Stomach (tissue), 19 donors: ENCODE measurements at regions of chr15 and their contacts with region 1.

Region 1: GRCh38 chr15:38817427-38818156 is 253.0 kb upstream of the RASGRP1 start:
- DNase-seq: peak; percentile 89 to 93
- H3K4me3 ChIP-seq: no peak overlapping the region
- H3K27ac ChIP-seq: no peak overlapping the region
- H3K4me1 ChIP-seq: peaks cover 0 to 11% (median 7%) of the 10 kb centered on the region in 4 donors
- H3K27me3 ChIP-seq: no peaks in the 10 kb centered on the region
- CTCF ChIP-seq: peak in 6 of 7 experiments; percentile 67 to 99 (median 98)
- EP300 ChIP-seq: no peak
- POLR2A ChIP-seq: no peak

Region 2: DNA sequence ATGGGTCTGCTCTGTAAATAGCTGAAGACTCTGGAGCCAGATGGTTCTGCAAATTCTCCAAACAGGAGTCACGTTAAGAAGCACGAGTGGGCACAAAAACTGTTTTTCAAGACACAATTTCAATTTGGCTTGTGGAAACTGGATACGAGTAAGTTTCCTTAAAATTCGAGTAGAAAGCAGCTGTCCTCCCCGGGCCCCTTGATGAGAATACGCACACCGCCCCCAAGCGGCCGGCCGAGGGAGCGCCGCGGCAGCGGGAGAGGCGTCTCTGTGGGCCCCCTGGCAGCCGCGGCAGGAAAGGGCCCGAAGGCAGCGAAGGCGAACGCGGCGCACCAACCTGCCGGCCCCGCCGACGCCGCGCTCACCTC is 762.5 kb after region 1 on chr15:
- intact Hi-C with region 1: loop called (anchors 5 kb)
- DNase-seq: peak; percentile 93 to 97
- H3K4me3 ChIP-seq: peak overlapping the region; percentile 54 to 76 (median 63)
- H3K27ac ChIP-seq: peak overlapping the region; percentile 77 to 96 (median 94)
- H3K4me1 ChIP-seq: peaks cover 15 to 67% (median 49%) of the 10 kb centered on the region in 4 donors
- H3K27me3 ChIP-seq: peaks cover 0 to 14% (median 4%) of the 10 kb centered on the region in 3 donors
- CTCF ChIP-seq: peak in 5 of 7 experiments; percentile 70 to 99 (median 97)
- EP300 ChIP-seq: no peak
- POLR2A ChIP-seq: no peak

Region 3: GRCh38 chr15:39756806-39757522 is 939.4 kb after region 1 on chr15:
- intact Hi-C with region 1: loop called (anchors 10 kb)
- DNase-seq: peak in 1 of 2 donors; percentile 84
- H3K4me3 ChIP-seq: no peak overlapping the region
- H3K27ac ChIP-seq: no peak overlapping the region
- H3K4me1 ChIP-seq: no peaks in the 10 kb centered on the region
- H3K27me3 ChIP-seq: no peaks in the 10 kb centered on the region
- CTCF ChIP-seq: peak in 4 of 7 experiments; percentile 39 to 87 (median 78)
- EP300 ChIP-seq: no peak
- POLR2A ChIP-seq: no peak